ENCODE measurements at regions of chr15 and their contacts with region 1.

Region 1: DNA sequence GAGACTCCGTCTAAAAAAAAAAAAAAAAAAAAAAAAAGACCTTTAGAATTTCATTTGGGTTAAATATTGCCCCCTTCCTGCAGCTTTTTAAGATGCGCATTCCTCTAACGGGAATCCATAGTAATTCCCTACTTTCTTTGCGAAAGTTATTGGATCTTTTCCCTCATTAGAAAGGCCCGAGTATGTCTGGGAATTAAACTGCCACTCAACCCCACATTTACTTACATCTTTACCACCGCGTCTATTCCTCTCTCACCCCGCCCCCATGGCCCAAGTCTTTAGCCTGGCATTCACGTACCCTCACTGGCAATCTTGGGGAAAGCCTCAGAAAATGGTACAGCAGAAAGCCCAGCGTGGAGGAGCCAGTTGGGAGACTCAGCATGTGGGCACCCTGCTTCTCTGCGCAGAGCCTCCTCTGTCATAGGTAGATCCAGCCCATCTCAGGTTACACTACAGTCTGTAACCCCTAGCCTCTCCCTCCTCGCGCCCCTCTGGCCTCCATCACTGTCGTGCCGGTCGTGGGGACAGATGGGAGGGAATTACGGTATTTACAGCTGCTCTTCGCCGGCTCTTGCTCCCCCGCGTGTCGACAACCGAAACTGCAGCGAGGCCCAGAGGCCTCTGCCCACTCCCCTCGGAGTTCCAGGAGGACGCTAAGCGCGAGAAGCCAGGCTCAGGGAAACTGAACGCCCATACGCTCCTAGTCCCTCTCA is 6.4 kb upstream of the ANKDD1A start:
- DNase-seq: peak; percentile 81
- H3K4me3 Mint-ChIP-seq: peak overlapping the region; percentile 29
- H3K27ac Mint-ChIP-seq: peak overlapping the region; percentile 64
- H3K4me1 Mint-ChIP-seq: peaks cover 43% of the 10 kb centered on the region
- H3K27me3 Mint-ChIP-seq: peaks cover 1% of the 10 kb centered on the region

Region 2: DNA sequence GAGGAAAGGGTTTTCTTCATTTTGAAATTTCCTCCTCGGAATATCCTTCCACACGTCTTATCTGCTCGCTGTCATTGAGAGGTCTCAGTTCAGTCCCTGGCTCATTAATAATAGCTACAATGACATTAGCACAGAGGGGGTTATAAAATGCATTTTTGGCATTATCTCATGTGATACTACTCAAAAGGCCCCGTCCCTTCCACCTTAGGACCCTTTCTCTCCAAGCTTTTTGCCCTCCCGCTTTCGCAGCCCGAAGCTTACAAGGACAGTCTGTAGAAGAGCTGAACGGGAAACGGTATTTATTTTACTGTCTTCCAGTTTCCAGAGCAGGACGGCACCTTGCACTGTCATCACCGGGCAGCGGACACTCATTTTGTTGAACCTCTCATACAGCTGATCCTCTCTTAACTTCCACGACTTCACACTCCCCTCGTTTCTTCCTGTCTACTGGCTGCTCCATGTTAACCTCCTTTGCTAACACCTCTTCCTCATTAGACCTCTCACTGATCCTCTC is 69.2 kb before region 1 on chr15:
- CTCF ChIA-PET with region 1: interaction called, 14 read pairs
- POLR2A ChIA-PET with region 1: interaction called, 14 read pairs
- DNase-seq: no peak
- H3K4me3 Mint-ChIP-seq: peak overlapping the region; percentile 35
- H3K27ac Mint-ChIP-seq: peak overlapping the region; percentile 55
- H3K4me1 Mint-ChIP-seq: peaks cover 47% of the 10 kb centered on the region
- H3K27me3 Mint-ChIP-seq: no peaks in the 10 kb centered on the region

Region 3: GRCh38 chr15:64841258-64842095 is 63.8 kb before region 1 on chr15 and contains the start of gene PLEKHO2:
- CTCF ChIA-PET with region 1: interaction called, 14 read pairs
- POLR2A ChIA-PET with region 1: interaction called, 14 read pairs
- DNase-seq: peak; percentile 95
- H3K4me3 Mint-ChIP-seq: peak within 1 kb of the TSS; percentile 98
- H3K27ac Mint-ChIP-seq: peak within 1 kb of the TSS; percentile 84
- H3K4me1 Mint-ChIP-seq: peaks cover 71% of the 10 kb centered on the region
- H3K27me3 Mint-ChIP-seq: no peaks in the 10 kb centered on the region
- total RNA-seq, gene PLEKHO2: 32.9 to 33.1 TPM

Measured in activated CD4-positive, alpha-beta memory T cell treated with anti-CD3 and anti-CD28 coated beads, Interleukin-2, amount 10 ng/mL, durations not matched to agents 7 days and 5 days (primary cell).